Panc1 (cell line): ENCODE measurements at regions of chr11 and their contacts with region 1.

Region 1: DNA sequence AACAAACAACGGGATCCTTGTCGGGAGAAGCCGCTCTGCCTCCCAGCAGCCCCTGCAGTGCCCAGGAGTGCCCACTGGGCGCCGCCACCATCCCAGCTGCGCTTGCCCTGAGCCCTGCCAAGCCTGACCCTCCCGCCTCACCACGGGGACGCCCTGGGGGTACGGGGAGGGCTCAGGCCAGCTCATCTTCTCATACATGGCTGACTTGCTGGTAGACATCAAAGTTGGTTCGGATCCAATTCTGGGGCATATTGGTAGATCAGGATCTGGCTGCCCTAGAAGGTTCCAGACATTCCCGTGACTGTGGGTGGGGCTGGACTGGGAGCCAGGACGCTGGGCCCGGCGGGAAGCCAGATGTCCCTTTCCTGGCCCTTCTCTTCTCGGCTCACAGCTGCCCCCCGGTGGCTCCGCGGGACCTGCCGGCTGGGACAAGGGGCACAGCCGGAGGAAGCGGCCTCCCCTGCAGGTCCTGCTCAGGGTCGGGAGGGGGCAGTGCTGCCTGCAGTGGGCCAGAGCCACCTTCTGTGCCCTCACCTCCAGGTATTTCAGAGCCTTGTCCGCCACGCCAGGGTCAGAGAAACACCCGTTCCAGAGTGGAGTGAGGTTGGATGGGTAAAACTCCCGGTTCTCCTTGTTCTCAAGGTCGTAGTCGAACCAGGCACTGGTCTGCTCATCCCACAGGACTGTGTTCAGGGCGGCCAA is 10.6 kb upstream of the TREH start:
- DNase-seq: peak; percentile 72
- ATAC-seq: peak; percentile 97
- H3K4me3 ChIP-seq: peak overlapping the region; percentile 43 to 74
- H3K27ac ChIP-seq: peak overlapping the region; percentile 93
- H3K4me1 ChIP-seq: peaks cover 3% of the 10 kb centered on the region
- H3K27me3 ChIP-seq: peaks cover 2% of the 10 kb centered on the region; the same call in 1 of the 2 replicates
- CTCF ChIP-seq: peak; percentile 100

Region 2: GRCh38 chr11:118778898-118779297 is 88.9 kb after region 1 on chr11:
- CTCF ChIA-PET with region 1: no interaction called
- POLR2A ChIA-PET with region 1: no interaction called
- in situ Hi-C with region 1: no loop called
- intact Hi-C with region 1: loop called (anchors 5 kb)
- DNase-seq: no peak
- ATAC-seq: no peak
- H3K4me3 ChIP-seq: no peak overlapping the region
- H3K27ac ChIP-seq: no peak overlapping the region
- H3K4me1 ChIP-seq: no peaks in the 10 kb centered on the region
- H3K27me3 ChIP-seq: no peaks in the 10 kb centered on the region
- CTCF ChIP-seq: no peak

Region 3: DNA sequence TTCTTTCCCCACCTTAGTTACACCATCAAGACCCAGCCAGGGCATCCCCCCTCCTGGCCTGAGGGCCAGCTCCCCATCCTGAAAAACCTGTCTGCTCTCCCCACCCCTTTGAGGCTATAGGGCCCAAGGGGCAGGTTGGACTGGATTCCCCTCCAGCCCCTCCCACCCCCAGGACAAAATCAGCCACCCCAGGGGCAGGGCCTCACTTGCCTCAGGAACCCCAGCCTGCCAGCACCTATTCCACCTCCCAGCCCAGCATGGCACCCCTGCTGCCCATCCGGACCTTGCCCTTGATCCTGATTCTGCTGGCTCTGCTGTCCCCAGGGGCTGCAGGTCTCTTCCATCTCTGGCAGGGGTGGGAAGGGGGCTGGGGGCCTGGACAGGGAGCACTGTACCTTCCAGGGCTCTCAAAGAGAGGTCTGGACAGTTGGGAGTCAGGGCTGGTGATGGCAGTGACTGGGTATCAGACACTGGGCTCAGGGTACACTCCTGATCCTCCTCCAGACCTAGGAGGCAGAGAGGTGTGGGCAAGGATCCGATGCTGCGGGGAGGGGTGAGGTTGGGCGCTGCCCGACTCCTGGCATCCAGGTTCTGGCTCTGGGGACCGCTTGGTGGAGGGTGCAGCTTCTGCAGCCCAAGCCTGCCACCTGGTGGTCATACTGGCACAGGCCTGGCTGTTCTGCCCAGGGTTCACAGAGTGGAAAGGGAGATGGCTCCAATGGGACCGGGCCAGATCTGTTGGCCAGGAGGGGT is 266.3 kb after region 1 on chr11 and contains the start of gene UPK2:
- CTCF ChIA-PET with region 1: interaction called, 6 read pairs
- POLR2A ChIA-PET with region 1: no interaction called
- in situ Hi-C with region 1: no loop called
- intact Hi-C with region 1: loop called (anchors 1 kb)
- DNase-seq: peak; percentile 72
- ATAC-seq: peak; percentile 99
- H3K4me3 ChIP-seq: no peak within 1 kb of the TSS
- H3K27ac ChIP-seq: no peak within 1 kb of the TSS
- H3K4me1 ChIP-seq: no peaks in the 10 kb centered on the region
- H3K27me3 ChIP-seq: no peaks in the 10 kb centered on the region
- CTCF ChIP-seq: peak; percentile 96
- total RNA-seq, gene UPK2: 0.92 TPM

Region 4: GRCh38 chr11:119222308-119222707 is 532.3 kb after region 1 on chr11:
- CTCF ChIA-PET with region 1: no interaction called
- POLR2A ChIA-PET with region 1: no interaction called
- in situ Hi-C with region 1: no loop called
- intact Hi-C with region 1: no loop called
- DNase-seq: no peak
- ATAC-seq: peak; percentile 49; the same call in 1 of the 2 replicates
- H3K4me3 ChIP-seq: no peak overlapping the region
- H3K27ac ChIP-seq: no peak overlapping the region
- H3K4me1 ChIP-seq: peaks cover 17% of the 10 kb centered on the region
- H3K27me3 ChIP-seq: no peaks in the 10 kb centered on the region
- CTCF ChIP-seq: no peak